ENCODE measurements at regions of chr14 and their contacts with region 1.

Region 1: DNA sequence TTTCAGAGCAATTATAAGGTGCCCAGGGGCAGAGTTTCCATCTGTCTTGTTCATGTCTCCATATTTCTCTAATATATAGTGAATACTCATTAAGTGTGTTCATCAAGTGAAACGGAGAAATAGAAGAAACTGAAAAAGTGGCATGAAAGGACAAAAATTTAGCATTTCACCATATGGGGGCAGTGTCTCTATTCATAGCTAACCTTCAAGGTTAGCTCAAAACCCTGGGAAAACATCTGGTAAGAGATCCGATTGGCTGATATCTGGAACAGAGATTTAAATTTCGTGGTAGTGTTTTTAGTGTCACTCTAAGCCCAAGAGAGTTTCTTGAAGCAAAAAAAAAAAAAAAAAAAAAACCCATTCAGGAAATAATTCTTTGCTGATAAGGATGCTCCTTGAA is 367.5 kb downstream of the DAD1 start:
- DNase-seq: no peak
- H3K4me3 Mint-ChIP-seq: peak overlapping the region; percentile 50
- H3K27ac Mint-ChIP-seq: no peak overlapping the region
- H3K4me1 Mint-ChIP-seq: peaks cover 14% of the 10 kb centered on the region
- H3K27me3 Mint-ChIP-seq: no peaks in the 10 kb centered on the region

Region 2: GRCh38 chr14:22200977-22201605 is 20.4 kb before region 1 on chr14:
- CTCF ChIA-PET with region 1: interaction called, 10 read pairs
- POLR2A ChIA-PET with region 1: no interaction called
- DNase-seq: no peak
- H3K4me3 Mint-ChIP-seq: no peak overlapping the region
- H3K27ac Mint-ChIP-seq: peak overlapping the region; percentile 40
- H3K4me1 Mint-ChIP-seq: peaks cover 23% of the 10 kb centered on the region
- H3K27me3 Mint-ChIP-seq: no peaks in the 10 kb centered on the region